Heart right ventricle (tissue), 16 donors: ENCODE measurements at regions of chr11 and their contacts with region 1.

Region 1: DNA sequence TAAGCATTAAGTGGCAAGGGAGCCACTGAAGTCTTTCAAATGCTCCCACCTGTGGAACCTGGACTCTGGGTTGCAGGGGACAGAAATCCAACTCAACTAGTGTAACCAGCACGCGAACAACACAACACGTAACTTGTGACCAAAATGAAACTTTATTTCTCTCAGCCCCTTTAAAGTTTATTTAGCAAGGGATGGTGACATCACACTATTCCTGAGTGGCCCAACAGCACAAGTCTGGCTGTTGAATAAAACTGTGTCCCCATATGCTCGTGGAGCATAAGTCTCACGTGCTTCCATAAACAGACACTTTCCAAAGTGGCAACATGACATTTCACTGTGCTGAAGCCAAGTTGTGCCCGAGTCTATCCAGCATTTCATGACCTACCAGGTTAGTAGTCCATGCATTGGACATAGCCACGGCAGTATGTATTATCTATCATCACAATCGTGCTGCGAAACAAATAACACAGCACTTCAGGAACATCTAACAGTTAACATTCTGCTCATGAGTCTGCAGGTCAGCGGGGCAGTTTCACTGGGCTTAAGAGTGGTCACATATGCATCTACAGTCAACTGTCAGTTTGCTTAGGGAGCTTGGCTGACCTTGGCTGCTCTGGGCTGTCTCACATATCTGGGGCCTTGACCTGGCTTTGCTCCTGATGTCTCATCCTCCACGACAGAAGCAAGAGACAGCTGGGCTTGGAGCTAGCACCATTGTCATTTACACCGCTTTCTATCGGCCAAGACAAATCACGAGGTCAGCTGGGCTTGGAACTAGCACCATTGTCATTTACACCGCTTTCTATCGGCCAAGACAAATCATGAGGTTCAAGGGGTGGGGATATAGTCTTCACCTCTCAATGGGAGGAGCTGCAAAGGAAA is 35.0 kb upstream of the LMO2 start:
- DNase-seq: no peak
- ATAC-seq: no peak
- H3K4me3 ChIP-seq: no peak overlapping the region
- H3K27ac ChIP-seq: no peak overlapping the region
- H3K4me1 ChIP-seq: peaks cover 7 to 27% (median 22%) of the 10 kb centered on the region in 9 donors
- H3K27me3 ChIP-seq: no peaks in the 10 kb centered on the region
- CTCF ChIP-seq: no peak

Region 2: DNA sequence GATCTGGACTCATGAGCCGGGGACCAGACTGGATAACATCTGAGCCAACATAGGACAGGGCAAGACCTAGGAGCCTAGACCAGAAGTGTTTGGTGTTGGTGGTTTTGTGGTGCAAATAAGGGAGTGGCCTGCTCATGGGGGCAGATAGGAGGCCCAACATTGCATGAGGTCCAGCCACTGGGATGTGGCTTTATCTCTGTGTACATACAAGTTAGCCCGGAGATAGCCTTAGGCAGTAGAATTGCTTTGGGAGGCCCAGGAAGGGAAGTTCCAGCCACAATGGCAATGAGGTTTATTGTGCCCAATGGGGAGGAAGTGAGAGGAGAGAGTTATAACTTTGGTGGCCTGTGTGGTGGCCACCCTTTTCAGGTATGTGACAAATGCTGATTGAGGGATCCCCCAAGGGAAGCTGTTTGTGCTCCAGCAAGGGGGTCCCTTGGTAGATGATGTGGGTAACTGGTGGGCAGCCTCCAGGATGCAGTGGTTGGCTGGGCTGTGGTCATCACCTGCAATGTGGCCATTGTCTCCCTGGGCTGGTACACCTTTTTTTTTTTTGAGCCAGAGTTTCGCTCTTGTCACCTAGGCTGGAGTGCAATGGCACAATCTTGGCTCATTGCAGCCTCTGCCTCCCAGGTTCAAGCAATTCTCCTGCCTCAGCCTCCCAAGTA is 41.4 kb before region 1 on chr11:
- intact Hi-C with region 1: loop called in 1 of 10 experiments (anchors 5 kb)
- DNase-seq: no peak
- ATAC-seq: no peak
- H3K4me3 ChIP-seq: no peak overlapping the region
- H3K27ac ChIP-seq: no peak overlapping the region
- H3K4me1 ChIP-seq: peaks cover 0 to 5% (median 0%) of the 10 kb centered on the region in 9 donors
- H3K27me3 ChIP-seq: peaks cover 0 to 15% (median 0%) of the 10 kb centered on the region in 7 donors
- CTCF ChIP-seq: no peak